H1 (cell line): ENCODE measurements at regions of chr6 and their contacts with region 1.

Region 1: DNA sequence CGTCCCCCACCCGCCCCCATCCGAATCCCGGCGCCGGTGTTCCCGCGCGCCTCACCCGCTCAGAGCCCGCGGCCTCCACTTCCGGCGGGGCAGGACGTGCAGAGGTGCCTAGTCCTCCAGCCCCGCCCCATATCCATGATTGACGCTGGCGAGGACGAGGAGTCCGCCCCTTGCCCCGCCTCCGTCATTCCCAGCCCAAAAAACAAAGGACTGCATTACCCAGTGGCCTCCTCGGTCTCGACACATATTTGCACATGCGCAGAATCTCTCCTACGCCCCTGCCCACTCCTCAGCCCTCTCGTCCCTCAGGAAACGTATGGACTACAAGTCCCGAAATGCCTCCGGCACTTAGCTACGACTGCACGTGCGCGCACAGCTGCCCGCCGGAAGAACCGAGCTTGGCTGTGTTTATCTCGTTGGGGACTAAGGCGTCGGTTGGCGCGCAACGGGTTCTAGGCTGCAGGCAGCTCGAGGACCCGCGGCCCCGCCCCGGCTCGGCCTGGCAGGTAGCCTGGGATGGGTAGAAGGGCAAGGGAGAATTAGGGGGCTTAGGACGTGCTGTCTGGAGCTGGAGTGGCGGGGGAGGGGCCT is at the starts of genes KLHDC3 and MEA1:
- DNase-seq: peak; percentile 99 to 100
- H3K4me3 ChIP-seq: peak within 1 kb of the TSS; percentile 85 to 99 (median 88)
- H3K27ac ChIP-seq: peak within 1 kb of the TSS; percentile 54
- H3K4me1 ChIP-seq: peaks cover 0 to 9% (median 4%) of the 10 kb centered on the region in 4 experiments; a peak in 6 of 7 replicates
- H3K27me3 ChIP-seq: no peaks in the 10 kb centered on the region
- CTCF ChIP-seq: no peak
- EP300 ChIP-seq: peak in 1 of 2 experiments; percentile 23; a peak in 1 of 3 replicates
- POLR2A ChIP-seq: no peak
- RAD21 ChIP-seq: peak in 1 of 2 experiments; percentile 12; a peak in 1 of 4 replicates
- total RNA-seq, gene KLHDC3: 181 and 182 TPM in 2 replicates
- total RNA-seq, gene MEA1: 94.2 and 102 TPM in 2 replicates

Region 2: GRCh38 chr6:42745707-42746462 is 268.1 kb before region 1 on chr6 and contains the start of gene TBCC:
- CTCF ChIA-PET with region 1: no interaction called
- POLR2A ChIA-PET with region 1: no interaction called
- DNase-seq: peak; percentile 86 to 96
- H3K4me3 ChIP-seq: peak within 1 kb of the TSS; percentile 88 to 99 (median 96)
- H3K27ac ChIP-seq: peak within 1 kb of the TSS; percentile 84
- H3K4me1 ChIP-seq: peaks cover 5 to 7% (median 6%) of the 10 kb centered on the region in 4 experiments; a peak in 6 of 7 replicates
- H3K27me3 ChIP-seq: no peaks in the 10 kb centered on the region
- CTCF ChIP-seq: no peak
- EP300 ChIP-seq: no peak
- POLR2A ChIP-seq: peak; percentile 89 to 91
- RAD21 ChIP-seq: no peak
- total RNA-seq, gene TBCC: 25.5 and 27.3 TPM in 2 replicates

Region 3: DNA sequence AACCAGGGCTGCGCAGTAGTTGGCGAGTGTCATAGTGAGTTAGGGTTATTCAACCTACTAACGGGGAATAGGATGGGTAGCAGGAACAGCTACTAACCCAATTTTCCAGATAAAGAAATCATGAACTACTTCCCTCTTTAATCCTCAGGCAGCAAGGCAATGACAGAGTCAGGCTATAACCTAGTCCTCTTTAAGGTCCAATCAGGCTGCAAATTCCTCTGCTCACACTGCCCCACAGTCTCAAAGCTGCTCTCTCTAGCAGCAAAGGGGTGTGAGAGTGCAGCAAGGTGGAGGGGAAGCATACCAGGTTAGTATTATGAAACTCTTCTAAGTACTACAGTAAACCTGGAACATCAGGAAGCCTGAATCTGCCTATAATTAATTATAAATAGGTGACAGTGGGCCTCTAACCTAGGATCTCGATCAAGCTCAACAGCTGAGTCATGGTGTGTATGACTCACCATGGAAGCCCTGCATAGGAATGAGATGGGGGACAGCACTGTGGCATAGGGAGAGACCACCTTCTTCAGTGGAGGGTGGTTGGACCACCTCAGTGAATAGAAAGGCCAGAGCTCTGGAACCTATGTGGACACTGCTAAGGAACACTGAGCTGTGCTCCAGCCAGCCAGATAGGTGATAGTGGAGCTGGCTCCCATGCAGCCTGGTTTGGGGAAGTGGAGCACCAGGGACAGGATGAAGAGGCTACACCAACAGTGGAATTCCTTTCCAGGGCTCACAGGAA is 42.9 kb before region 1 on chr6:
- CTCF ChIA-PET with region 1: interaction called, 22 read pairs
- POLR2A ChIA-PET with region 1: no interaction called
- DNase-seq: no peak
- H3K4me3 ChIP-seq: no peak overlapping the region
- H3K27ac ChIP-seq: 0 out of 2 replicates have a peak overlapping the region, but pooled peaks have one; percentile 19
- H3K4me1 ChIP-seq: peaks cover 0 to 3% (median 0%) of the 10 kb centered on the region in 4 experiments; a peak in 2 of 7 replicates
- H3K27me3 ChIP-seq: no peaks in the 10 kb centered on the region
- CTCF ChIP-seq: no peak
- EP300 ChIP-seq: no peak
- POLR2A ChIP-seq: no peak
- RAD21 ChIP-seq: no peak

Region 4: DNA sequence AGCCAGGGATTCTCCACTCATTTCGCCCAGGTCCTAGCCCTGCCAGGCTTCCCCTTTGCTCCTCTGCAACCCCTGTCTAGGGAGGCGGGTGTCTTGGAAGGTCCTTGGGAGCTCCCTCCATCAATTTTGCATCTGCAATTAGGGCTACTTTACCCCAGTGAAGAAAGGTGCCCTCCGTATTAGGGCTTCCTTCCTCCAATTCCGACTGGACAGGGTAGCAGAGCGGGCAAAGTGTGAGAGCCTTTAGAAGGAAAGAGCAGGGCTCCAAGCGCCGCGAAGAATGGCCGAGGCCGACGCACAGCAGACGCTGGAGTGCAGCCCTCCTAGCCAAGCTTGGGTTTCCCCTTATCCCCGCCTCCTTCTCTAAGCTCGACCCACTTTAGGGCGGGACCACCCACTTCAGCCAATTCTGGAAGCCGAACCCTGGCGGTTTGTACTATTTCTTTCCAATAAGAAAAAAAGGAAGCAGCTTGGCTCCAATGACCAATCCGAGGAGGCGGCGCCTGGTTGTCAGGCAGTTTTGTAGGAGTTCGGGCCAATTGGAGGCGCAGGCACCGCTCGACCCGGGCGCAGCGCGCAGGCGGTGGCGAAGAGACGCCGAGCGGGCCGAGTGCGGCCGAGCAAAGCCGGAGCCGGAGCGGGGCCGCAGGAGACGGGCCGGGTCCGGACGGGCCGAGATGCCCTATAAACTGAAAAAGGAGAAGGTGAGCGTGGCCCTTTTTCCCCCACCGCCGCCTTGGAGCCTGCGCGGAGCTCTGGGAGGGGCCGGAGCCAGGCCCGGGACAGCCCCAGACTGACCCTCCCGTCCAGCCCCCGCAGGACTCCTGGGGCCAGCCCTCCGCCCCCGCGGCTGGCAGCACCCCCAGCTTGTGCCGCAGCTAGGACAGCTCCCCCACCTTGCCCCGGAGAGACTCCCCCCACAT is 29.7 kb before region 1 on chr6 and contains the start of gene PPP2R5D:
- CTCF ChIA-PET with region 1: interaction called, 13 read pairs
- POLR2A ChIA-PET with region 1: interaction called, 26 read pairs
- DNase-seq: peak; percentile 92 to 95
- H3K4me3 ChIP-seq: peak within 1 kb of the TSS; percentile 63 to 74 (median 70)
- H3K27ac ChIP-seq: peak within 1 kb of the TSS; percentile 73
- H3K4me1 ChIP-seq: peaks cover 3 to 10% (median 5%) of the 10 kb centered on the region in 4 experiments; a peak in 6 of 7 replicates
- H3K27me3 ChIP-seq: no peaks in the 10 kb centered on the region
- CTCF ChIP-seq: no peak
- EP300 ChIP-seq: no peak
- POLR2A ChIP-seq: peak; percentile 81 to 96
- RAD21 ChIP-seq: 0 out of 4 replicates have a peak, but pooled peaks of 1 of the 2 experiments have one; percentile 4
- total RNA-seq, gene PPP2R5D: 52.1 and 52.4 TPM in 2 replicates

Region 5: GRCh38 chr6:43053545-43054205 is 39.7 kb after region 1 on chr6 and contains the start of gene CUL7:
- CTCF ChIA-PET with region 1: interaction called, 4 read pairs
- POLR2A ChIA-PET with region 1: interaction called, 584 read pairs
- DNase-seq: peak; percentile 73 to 88
- H3K4me3 ChIP-seq: peak within 1 kb of the TSS; percentile 72 to 91 (median 78)
- H3K27ac ChIP-seq: peak within 1 kb of the TSS; percentile 87
- H3K4me1 ChIP-seq: peaks cover 4 to 15% (median 7%) of the 10 kb centered on the region in 4 experiments; a peak in 6 of 7 replicates
- H3K27me3 ChIP-seq: no peaks in the 10 kb centered on the region
- CTCF ChIP-seq: no peak
- EP300 ChIP-seq: no peak
- POLR2A ChIP-seq: peak in 1 of 2 experiments; percentile 92; a peak in 2 of 3 replicates
- RAD21 ChIP-seq: 0 out of 4 replicates have a peak, but pooled peaks of 1 of the 2 experiments have one; percentile 0
- total RNA-seq, gene CUL7: 10.8 and 11.4 TPM in 2 replicates

Region 6: DNA sequence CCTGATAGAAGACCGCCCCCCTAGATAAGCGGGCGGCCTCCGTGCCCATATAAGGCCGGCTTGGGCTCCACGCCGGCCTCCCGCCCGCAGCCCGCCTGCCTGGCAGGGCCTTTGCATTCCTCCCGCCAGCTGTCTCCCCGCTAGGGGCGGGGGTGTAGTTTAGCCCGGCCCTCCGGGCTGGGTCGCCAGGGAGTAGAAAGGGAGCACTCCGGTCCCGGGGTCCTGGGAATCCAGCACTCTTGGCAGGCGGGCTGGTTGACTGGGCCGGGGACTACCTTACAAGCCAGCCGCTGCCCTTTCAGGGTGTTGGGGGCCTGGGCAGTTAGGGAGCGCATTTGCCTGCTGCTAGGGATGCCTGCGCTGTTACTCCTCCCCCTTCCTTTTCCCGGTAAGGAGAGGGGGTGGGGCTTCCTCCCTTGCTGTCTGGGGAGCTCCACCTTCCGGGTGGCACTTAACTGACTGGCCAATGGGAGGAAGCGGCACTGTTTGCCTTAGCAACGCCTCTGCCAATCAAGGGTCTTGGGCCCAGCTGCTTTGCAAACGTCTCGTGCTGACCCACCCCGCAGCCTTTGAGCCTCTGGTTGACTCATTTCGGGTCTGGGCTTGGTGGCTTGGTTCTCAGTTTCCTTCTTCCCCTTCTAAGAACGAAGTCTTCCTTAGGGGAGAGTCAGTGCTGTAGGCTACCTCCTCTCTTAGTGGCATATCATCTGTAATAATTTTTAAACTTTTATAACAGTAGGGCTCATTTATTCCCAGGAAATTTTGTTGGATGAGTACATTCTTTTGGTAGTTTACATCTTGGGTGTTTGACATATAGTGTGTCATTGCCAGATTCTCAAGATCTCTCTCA is 160.6 kb after region 1 on chr6:
- CTCF ChIA-PET with region 1: interaction called, 3 read pairs
- POLR2A ChIA-PET with region 1: interaction called, 10 read pairs
- DNase-seq: peak; percentile 90 to 95
- H3K4me3 ChIP-seq: peak overlapping the region; percentile 27 to 86 (median 38)
- H3K27ac ChIP-seq: peak overlapping the region; percentile 77; the same call in 1 of the 2 replicates
- H3K4me1 ChIP-seq: peaks cover 9 to 17% (median 11%) of the 10 kb centered on the region in 4 experiments
- H3K27me3 ChIP-seq: peaks cover 0 to 6% (median 2%) of the 10 kb centered on the region in 4 experiments; a peak in 3 of 7 replicates
- CTCF ChIP-seq: no peak; a peak in 1 of 4 replicates
- EP300 ChIP-seq: no peak; a peak in 1 of 3 replicates
- POLR2A ChIP-seq: peak in 1 of 2 experiments; percentile 59; a peak in 2 of 3 replicates
- RAD21 ChIP-seq: peak in 1 of 2 experiments; percentile 11; a peak in 1 of 4 replicates